Heart right ventricle (tissue), 16 donors: ENCODE measurements at regions of chr13 and their contacts with region 1.

Region 1: DNA sequence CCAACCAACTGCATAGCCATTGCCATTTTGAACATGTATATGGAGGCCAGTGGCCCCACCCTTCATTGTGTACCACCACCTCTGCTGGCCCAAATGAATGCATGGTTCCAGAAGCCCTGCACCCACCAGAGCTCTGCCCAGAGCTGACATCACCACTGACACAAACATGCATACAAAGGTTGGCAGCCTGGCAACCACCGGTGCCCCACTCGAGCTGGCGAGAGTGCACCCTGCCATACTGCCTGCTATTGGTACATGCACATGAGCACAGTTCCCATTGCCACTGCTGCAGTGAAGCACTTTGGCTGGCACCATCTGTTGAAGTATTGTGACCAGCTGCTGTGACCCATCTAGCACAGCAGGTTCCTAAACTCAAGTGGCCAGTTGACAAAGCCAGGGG is 1564.9 kb downstream of the OLFM4 start:
- DNase-seq: no peak
- ATAC-seq: peak in 1 of 8 donors; percentile 20
- H3K4me3 ChIP-seq: no peak overlapping the region
- H3K27ac ChIP-seq: no peak overlapping the region
- H3K4me1 ChIP-seq: no peaks in the 10 kb centered on the region
- H3K27me3 ChIP-seq: no peaks in the 10 kb centered on the region
- CTCF ChIP-seq: no peak

Region 2: GRCh38 chr13:54486421-54487166 is 106.9 kb before region 1 on chr13:
- intact Hi-C with region 1: no loop called
- DNase-seq: no peak
- ATAC-seq: no peak
- H3K4me3 ChIP-seq: no peak overlapping the region
- H3K27ac ChIP-seq: no peak overlapping the region
- H3K4me1 ChIP-seq: no peaks in the 10 kb centered on the region
- H3K27me3 ChIP-seq: no peaks in the 10 kb centered on the region
- CTCF ChIP-seq: no peak

Region 3: DNA sequence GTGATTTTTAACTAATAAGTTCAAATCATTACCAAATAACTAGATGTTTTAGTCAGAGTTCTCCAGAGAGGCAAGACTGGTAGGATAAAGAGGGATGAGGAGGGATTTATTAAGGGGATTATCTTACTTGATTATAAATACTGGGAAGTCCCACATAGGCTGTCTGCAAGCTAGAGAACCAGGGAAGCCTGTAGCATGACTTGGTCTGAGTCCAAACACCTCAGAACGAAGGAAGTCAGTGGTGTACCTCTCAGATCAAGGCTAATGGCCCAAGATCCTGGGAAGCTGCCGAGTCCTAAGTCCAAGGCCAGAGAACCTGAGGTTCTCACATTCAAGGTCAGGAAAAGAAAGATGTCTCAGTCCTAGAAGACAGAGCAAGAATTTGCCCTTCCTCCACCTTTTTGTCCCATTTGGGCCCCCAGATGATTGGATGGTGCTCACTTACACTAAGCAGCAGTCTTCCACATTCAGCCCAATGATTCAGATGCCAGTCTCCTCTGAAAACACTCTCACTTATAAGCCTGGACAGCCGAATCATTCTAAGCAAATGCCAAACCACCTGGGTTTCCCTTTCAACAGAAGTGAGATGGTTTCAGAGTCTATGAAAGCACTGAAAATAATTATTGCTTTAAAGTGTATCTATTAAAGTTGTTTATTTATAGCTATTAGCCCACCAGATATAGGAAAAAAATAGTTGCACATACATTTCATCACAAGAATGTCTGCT is 34.3 kb after region 1 on chr13:
- intact Hi-C with region 1: no loop called
- DNase-seq: no peak
- ATAC-seq: no peak
- H3K4me3 ChIP-seq: no peak overlapping the region
- H3K27ac ChIP-seq: no peak overlapping the region
- H3K4me1 ChIP-seq: no peaks in the 10 kb centered on the region
- H3K27me3 ChIP-seq: no peaks in the 10 kb centered on the region
- CTCF ChIP-seq: no peak

Region 4: GRCh38 chr13:54890976-54891375 is 297.5 kb after region 1 on chr13:
- intact Hi-C with region 1: loop called in 1 of 10 experiments (anchors 5 kb)
- DNase-seq: no peak
- ATAC-seq: no peak
- H3K4me3 ChIP-seq: no peak overlapping the region
- H3K27ac ChIP-seq: no peak overlapping the region
- H3K4me1 ChIP-seq: no peaks in the 10 kb centered on the region
- H3K27me3 ChIP-seq: no peaks in the 10 kb centered on the region
- CTCF ChIP-seq: no peak